ENCODE measurements at regions of chr17 and their contacts with region 1.

Region 1: GRCh38 chr17:44218344-44219107 is 949 bp downstream of the UBTF start:
- DNase-seq: peak; percentile 89
- ATAC-seq: peak; percentile 46
- H3K4me3 Mint-ChIP-seq: peak overlapping the region; percentile 83
- H3K27ac Mint-ChIP-seq: peak overlapping the region; percentile 94
- H3K4me1 Mint-ChIP-seq: peaks cover 58% of the 10 kb centered on the region
- H3K27me3 Mint-ChIP-seq: no peaks in the 10 kb centered on the region
- CTCF ChIP-seq: no peak

Region 2: GRCh38 chr17:44123356-44124117 is 95.0 kb before region 1 on chr17 and contains the start of gene HDAC5:
- CTCF ChIA-PET with region 1: interaction called, 3 read pairs
- POLR2A ChIA-PET with region 1: interaction called, 9 read pairs
- intact Hi-C with region 1: loop called (anchors 1 kb)
- DNase-seq: peak; percentile 95
- ATAC-seq: peak; percentile 96
- H3K4me3 Mint-ChIP-seq: peak within 1 kb of the TSS; percentile 95
- H3K27ac Mint-ChIP-seq: peak within 1 kb of the TSS; percentile 97
- H3K4me1 Mint-ChIP-seq: peaks cover 49% of the 10 kb centered on the region
- H3K27me3 Mint-ChIP-seq: no peaks in the 10 kb centered on the region
- CTCF ChIP-seq: no peak
- total RNA-seq, gene HDAC5: 28.4 and 35.1 TPM in 2 replicates

Region 3: GRCh38 chr17:44199553-44200477 is 18.7 kb before region 1 on chr17 and contains the start of gene ATXN7L3:
- CTCF ChIA-PET with region 1: interaction called, 5 read pairs
- POLR2A ChIA-PET with region 1: interaction called, 130 read pairs
- intact Hi-C with region 1: loop called (anchors 1 kb)
- DNase-seq: peak; percentile 95
- ATAC-seq: peak; percentile 85
- H3K4me3 Mint-ChIP-seq: peak within 1 kb of the TSS; percentile 91
- H3K27ac Mint-ChIP-seq: peak within 1 kb of the TSS; percentile 92
- H3K4me1 Mint-ChIP-seq: peaks cover 39% of the 10 kb centered on the region
- H3K27me3 Mint-ChIP-seq: no peaks in the 10 kb centered on the region
- CTCF ChIP-seq: no peak
- total RNA-seq, gene ATXN7L3: 92.0 and 103 TPM in 2 replicates

Region 4: DNA sequence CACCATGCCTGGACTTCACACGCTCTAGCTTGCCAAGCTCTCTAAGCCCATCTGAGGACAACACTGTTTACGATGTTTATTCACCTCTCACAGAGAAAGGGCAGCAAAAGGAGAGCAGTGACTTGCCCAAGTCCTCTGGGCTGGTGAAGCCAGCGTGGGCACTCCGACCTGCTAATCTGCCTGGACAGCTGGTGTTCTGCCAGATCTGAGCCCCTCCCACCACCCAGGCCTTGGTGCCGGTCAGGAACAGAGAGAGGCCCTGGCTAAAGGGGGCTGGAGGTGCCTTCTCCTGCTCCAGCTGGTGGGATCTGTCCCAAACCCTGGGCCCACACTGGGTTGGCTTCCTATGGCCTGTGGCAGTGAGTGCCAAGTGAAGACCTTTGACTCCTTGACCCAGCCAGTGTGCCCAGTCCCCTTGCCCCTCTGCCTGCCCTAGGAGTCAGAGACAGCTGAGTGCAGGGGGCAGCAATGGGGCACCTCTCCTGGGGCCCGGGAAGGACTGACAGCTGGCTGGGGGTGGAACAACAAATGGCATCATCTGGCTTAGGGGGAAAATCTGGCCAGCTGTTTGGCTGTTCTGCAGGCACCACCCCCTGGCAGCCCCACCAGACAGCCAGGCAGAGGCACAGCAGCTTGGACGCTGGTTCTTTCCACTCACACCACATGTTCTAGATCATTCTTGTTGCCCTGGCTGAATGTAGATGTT is 51.2 kb after region 1 on chr17:
- CTCF ChIA-PET with region 1: no interaction called
- POLR2A ChIA-PET with region 1: no interaction called
- intact Hi-C with region 1: no loop called
- DNase-seq: no peak
- ATAC-seq: no peak
- H3K4me3 Mint-ChIP-seq: no peak overlapping the region
- H3K27ac Mint-ChIP-seq: no peak overlapping the region
- H3K4me1 Mint-ChIP-seq: no peaks in the 10 kb centered on the region
- H3K27me3 Mint-ChIP-seq: peaks cover 16% of the 10 kb centered on the region
- CTCF ChIP-seq: no peak

Region 5: DNA sequence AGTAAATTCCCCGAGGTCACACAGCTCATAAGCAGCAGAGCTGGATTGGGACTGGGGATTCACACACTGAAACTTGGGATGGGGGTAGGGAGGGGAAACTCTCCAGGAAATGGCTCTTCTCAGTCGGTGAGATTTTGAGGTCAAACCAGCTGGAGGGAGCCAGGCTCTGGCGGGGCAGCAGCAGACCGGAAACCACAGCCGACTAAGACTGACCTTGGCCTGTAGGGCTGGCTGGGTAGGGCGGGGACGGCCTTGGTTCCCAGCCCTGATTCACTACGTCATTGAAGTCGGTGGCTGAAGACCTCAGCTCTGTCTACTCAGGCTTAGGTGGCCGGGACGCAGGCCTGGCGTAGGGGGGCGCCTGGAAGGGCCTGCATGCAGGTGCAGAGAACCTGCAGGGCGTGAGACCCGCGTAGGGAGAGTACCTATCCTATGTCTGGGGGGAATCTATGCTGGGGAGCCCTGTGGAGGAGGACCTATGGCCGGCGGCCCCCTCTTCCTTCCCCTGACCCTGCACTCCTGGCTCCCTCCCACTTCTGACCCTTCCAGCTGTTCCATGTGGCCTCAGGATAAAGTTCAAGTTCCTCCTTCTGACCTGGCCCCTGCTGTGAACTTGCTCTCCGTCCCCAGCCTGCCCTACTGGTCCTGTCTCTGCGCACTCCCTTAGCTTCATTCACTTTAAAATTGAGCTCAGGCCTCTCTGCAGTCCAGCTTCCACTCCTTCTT is 61.3 kb after region 1 on chr17:
- CTCF ChIA-PET with region 1: no interaction called
- POLR2A ChIA-PET with region 1: no interaction called
- intact Hi-C with region 1: loop called (anchors 5 kb)
- DNase-seq: no peak
- ATAC-seq: peak; percentile 52
- H3K4me3 Mint-ChIP-seq: no peak overlapping the region
- H3K27ac Mint-ChIP-seq: no peak overlapping the region
- H3K4me1 Mint-ChIP-seq: peaks cover 10% of the 10 kb centered on the region
- H3K27me3 Mint-ChIP-seq: peaks cover 11% of the 10 kb centered on the region
- CTCF ChIP-seq: no peak

Region 6: DNA sequence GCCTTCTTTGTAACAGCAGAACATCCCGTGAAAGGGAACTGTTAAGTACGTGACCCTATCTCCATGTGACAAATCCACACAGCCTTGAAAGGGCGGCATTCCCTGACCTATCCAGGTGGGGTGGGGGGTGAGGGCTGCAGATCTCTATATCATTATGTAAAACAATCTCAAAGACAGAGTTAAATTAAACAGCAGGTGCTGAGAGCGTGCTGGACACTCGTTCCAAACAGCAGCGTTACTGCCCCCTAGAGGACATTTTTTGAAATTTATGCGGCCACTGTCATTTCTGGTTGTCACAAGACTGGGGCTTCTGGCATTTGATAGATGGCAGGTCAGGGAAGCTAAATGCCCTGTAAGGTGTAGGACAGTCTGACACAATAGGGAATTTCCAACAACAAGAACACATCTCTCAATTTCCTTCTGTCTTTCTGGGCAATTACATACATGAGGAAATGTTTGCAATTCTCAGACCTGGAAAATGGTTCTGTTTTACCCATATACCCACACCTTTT is 112.8 kb after region 1 on chr17:
- CTCF ChIA-PET with region 1: interaction called, 35 read pairs
- POLR2A ChIA-PET with region 1: interaction called, 237 read pairs
- intact Hi-C with region 1: no loop called
- DNase-seq: no peak
- ATAC-seq: peak; percentile 32
- H3K4me3 Mint-ChIP-seq: no peak overlapping the region
- H3K27ac Mint-ChIP-seq: no peak overlapping the region
- H3K4me1 Mint-ChIP-seq: peaks cover 34% of the 10 kb centered on the region
- H3K27me3 Mint-ChIP-seq: no peaks in the 10 kb centered on the region
- CTCF ChIP-seq: peak; percentile 88

Region 7: DNA sequence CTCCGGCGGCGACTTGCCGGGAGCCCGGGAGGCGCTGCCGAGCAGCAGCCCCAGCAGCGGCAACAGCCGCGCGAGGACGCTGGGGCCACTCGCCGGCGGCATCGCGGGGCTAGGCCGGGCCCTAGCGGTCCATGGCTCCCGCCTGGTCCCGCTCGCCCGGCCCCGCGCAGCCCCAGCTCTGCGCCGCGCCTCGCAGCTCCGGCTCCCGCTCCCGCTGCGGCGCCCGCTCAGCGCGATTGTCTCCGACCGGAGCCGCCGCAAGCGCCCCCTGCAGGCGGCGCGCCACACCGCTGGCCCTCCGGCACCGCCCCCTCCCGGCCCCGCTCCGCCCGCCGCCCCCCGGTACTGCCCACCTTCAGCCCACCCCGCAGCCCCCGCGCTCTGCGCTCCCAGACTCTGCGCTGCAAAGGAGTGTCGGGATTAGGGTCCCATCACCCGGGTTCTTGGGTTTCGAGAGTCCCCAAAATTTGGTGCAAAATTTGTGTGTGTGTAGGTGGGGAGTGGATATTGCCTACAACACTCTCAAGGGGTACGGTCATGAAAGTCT is 145.2 kb after region 1 on chr17 and contains the start of gene FAM171A2:
- CTCF ChIA-PET with region 1: interaction called, 108 read pairs
- POLR2A ChIA-PET with region 1: interaction called, 10 read pairs
- intact Hi-C with region 1: no loop called
- DNase-seq: peak; percentile 78
- ATAC-seq: peak; percentile 92
- H3K4me3 Mint-ChIP-seq: peak within 1 kb of the TSS; percentile 79
- H3K27ac Mint-ChIP-seq: no peak within 1 kb of the TSS
- H3K4me1 Mint-ChIP-seq: peaks cover 11% of the 10 kb centered on the region
- H3K27me3 Mint-ChIP-seq: peaks cover 23% of the 10 kb centered on the region
- CTCF ChIP-seq: peak; percentile 55
- total RNA-seq, gene FAM171A2: 0.49 and 0.75 TPM in 2 replicates